ENCODE measurements at regions of chr5 and their contacts with region 1.

Region 1: DNA sequence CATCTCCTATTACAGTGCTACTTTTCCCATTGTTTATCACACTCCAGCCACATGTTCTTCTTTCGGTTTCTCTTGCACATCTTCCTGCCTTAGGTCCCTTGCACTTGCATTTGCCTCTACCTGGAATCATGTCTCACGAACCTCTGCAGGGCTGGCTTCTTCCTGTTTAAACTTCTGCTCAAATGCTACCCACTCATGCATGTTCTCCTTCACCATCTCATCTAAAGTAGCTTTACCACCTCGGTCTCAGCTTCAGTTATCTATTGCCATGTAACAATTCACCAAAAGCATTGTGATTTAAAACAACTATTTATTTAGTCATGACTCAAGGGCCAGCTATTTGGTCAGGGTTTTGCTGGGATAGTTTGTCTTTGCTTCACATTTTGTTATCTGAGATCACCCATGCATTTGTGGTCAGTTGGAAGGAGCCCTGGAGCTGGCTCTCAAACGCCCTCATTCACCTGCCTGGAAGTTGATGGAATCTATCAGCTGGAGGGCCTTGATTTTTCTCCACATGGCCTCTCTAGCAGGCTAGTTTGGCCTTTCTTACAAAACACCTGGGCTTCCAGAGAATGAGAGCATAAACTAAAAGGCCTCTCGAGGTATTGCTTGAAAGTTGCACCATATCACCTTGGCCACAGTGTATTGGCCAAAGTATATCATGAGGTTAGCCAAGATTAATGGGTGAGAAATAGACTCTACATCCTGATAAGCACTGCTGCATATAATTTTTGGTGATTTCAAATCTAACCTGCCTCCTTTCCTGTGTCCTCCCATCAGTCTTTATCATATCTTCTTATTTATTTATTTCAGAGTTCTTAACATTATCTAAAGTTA is 21.4 kb downstream of the SPINK1 start:
- DNase-seq: no peak
- H3K4me3 ChIP-seq: no peak overlapping the region
- H3K27ac ChIP-seq: no peak overlapping the region
- H3K4me1 ChIP-seq: no peaks in the 10 kb centered on the region
- H3K27me3 ChIP-seq: no peaks in the 10 kb centered on the region
- CTCF ChIP-seq: no peak
- POLR2A ChIP-seq: no peak

Region 2: DNA sequence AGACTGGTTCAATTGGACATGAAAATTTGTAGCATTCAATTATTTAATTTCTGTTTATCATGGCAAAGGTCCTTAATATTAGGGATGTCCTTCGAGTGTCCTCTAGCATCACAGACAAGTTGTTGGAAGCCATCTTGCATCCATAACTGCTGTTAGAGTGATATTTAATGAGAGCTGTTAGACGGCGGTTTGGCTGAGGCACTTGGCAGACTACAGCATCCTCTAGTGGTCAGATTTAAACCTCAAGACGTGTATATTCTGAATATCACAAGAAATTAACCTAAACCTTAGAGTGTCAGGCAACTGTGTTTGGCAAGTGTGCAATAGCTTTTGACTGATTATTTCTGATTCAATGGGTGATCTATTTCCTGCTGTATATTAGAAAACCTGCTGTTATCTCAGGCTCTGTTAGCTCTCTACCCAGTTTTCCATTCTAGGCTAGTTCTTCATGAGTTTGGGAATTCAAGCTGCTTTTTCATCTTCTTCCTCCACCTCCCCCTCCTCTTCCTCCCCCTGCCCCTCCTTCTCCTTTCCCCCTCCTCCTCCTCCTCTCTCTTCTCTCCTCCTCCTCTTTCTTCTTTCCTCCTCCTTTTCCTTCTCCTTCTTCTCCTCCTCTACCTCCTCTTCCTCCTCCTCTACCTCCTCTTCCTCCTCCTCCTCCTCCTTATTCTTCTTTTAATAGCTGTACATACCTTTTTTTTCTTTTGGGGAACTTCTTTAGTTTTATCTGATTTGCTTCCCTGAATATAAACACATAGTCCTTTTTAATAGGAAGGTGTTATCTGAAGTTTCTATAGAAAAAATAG is 12.8 kb after region 1 on chr5:
- CTCF ChIA-PET with region 1: interaction called, 11 read pairs
- POLR2A ChIA-PET with region 1: no interaction called
- dilution Hi-C with region 1: no loop called
- intact Hi-C with region 1: no loop called
- DNase-seq: peak; percentile 70
- H3K4me3 ChIP-seq: no peak overlapping the region
- H3K27ac ChIP-seq: no peak overlapping the region
- H3K4me1 ChIP-seq: no peaks in the 10 kb centered on the region
- H3K27me3 ChIP-seq: peaks cover 4 to 8% of the 10 kb centered on the region in 2 experiments
- CTCF ChIP-seq: peak; percentile 79 to 83
- POLR2A ChIP-seq: no peak

Measured in endothelial cell of umbilical vein (primary cell).